Activated naive CD4-positive, alpha-beta T cell treated with anti-CD3 and anti-CD28 coated beads, Interleukin-2, amount 10 ng/mL, durations not matched to agents 7 days and 5 days (primary cell): ENCODE measurements at regions of chr19 and their contacts with region 1.

Region 1: GRCh38 chr19:7355151-7355820 is 6.5 kb downstream of the ARHGEF18 start:
- DNase-seq: no peak
- H3K4me3 Mint-ChIP-seq: no peak overlapping the region
- H3K27ac Mint-ChIP-seq: no peak overlapping the region
- H3K4me1 Mint-ChIP-seq: peaks cover 54% of the 10 kb centered on the region
- H3K27me3 Mint-ChIP-seq: no peaks in the 10 kb centered on the region

Region 2: DNA sequence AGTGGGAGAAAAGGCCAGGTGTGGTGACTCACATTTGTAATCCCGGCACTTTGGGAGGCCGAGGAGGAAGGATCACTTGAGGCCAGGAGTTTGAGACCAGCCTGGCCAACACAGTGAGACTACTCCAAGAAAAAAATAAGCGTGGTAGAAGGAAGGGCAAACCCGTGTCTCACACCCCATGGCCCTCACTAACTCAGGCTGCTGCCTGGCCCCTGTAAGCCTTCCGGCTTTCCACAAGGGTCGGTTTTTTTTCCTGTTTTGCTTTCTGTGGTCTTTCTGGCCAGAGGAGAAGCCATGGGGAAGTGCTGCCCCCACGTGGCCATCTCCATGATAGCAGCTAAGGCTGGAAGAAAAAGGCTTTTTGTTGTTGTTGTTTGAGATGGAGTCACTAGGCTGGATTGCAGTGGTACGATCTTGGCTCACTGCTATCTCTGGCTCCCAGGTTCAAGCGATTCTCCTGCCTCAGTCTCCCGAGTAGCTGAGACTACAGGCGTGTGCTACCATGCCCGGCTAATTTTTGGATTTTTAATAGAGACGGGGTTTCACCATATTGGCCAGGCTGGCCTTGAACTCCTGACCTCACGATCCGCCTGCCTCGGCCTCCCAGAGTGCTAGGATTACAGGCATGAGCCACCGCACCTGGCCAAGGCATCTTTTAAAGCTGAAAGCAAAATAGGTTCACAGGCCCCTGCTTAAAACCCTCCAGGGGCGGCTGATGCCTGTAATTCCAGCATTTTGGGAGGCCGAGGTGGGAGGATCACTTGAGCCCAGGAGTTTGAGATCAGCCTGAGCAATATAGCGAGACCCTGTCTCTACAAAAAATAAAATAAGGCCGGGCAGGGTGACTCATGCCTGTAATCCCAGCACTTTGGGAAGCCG is 14.1 kb before region 1 on chr19:
- CTCF ChIA-PET with region 1: interaction called, 10 read pairs
- DNase-seq: peak; percentile 88
- H3K4me3 Mint-ChIP-seq: no peak overlapping the region
- H3K27ac Mint-ChIP-seq: peak overlapping the region; percentile 59
- H3K4me1 Mint-ChIP-seq: peaks cover 63% of the 10 kb centered on the region
- H3K27me3 Mint-ChIP-seq: peaks cover 26% of the 10 kb centered on the region

Region 3: DNA sequence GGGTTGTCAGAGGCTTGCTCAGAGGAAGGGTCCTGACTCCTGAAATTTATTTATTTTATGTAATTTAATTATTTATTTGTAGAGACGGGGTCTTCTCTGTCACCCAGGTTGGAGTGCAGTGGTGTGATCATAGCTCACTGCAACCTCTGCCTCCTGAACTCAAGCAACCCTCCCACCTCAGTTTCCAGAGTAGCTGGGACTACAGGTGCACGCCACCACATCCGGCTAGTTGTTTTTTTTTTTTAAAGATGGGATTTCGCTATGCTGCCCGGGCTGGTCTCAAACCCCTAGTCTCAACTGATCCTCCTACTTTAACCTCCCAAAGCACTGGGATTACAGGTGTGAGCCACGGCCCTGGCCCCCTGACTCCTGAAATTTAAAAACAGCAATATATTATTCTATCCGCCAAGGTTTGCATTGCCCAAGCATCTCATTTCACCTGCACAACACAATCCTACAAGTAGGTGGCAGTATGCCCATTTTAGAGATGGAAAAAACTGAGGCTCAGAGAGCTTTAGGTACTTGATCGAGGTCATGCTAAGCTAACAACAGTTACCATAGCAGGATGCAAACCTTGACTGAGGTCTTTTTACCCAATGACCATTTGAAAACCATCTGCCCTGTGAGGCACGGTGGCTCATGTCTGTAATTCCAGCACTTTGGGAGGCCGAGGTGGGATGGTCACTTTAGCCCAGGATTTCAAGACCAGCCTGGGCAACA is 11.6 kb after region 1 on chr19:
- CTCF ChIA-PET with region 1: interaction called, 16 read pairs
- DNase-seq: peak; percentile 38
- H3K4me3 Mint-ChIP-seq: no peak overlapping the region
- H3K27ac Mint-ChIP-seq: peak overlapping the region; percentile 16
- H3K4me1 Mint-ChIP-seq: peaks cover 3% of the 10 kb centered on the region
- H3K27me3 Mint-ChIP-seq: no peaks in the 10 kb centered on the region